Left lung (tissue), 14 donors: ENCODE measurements at regions of chr15 and their contacts with region 1.

Region 1: GRCh38 chr15:90320061-90320884 is 31.8 kb upstream of the ZNF774 start:
- DNase-seq: peak; percentile 83 to 93 (median 85)
- ATAC-seq: peak; percentile 91
- H3K4me3 ChIP-seq: no peak overlapping the region
- H3K27ac ChIP-seq: no peak overlapping the region
- H3K4me1 ChIP-seq: peaks cover 5 to 19% of the 10 kb centered on the region in 2 donors
- H3K27me3 ChIP-seq: no peaks in the 10 kb centered on the region
- CTCF ChIP-seq: peak; percentile 97 to 98

Region 2: GRCh38 chr15:90482124-90483011 is 162.1 kb after region 1 on chr15:
- intact Hi-C with region 1: loop called in 1 of 2 experiments (anchors 5 kb)
- DNase-seq: peak in 2 of 4 donors; percentile 43 to 62
- ATAC-seq: peak; percentile 21
- H3K4me3 ChIP-seq: no peak overlapping the region
- H3K27ac ChIP-seq: no peak overlapping the region
- H3K4me1 ChIP-seq: peaks cover 0 to 17% of the 10 kb centered on the region in 2 donors
- H3K27me3 ChIP-seq: no peaks in the 10 kb centered on the region
- CTCF ChIP-seq: peak; percentile 61 to 65